AG04449 (cell line): ENCODE measurements at regions of chr7 and their contacts with region 1.

Region 1: GRCh38 chr7:1193593-1194424 is 33.8 kb upstream of the ZFAND2A start:
- DNase-seq: no peak
- H3K4me3 ChIP-seq: no peak overlapping the region
- CTCF ChIP-seq: peak; percentile 73

Region 2: GRCh38 chr7:1175967-1176851 is 17.6 kb before region 1 on chr7:
- CTCF ChIA-PET with region 1: interaction called, 72 read pairs
- POLR2A ChIA-PET with region 1: no interaction called
- DNase-seq: no peak
- H3K4me3 ChIP-seq: peak overlapping the region; percentile 25; the same call in 1 of the 2 replicates
- CTCF ChIP-seq: peak; percentile 96

Region 3: DNA sequence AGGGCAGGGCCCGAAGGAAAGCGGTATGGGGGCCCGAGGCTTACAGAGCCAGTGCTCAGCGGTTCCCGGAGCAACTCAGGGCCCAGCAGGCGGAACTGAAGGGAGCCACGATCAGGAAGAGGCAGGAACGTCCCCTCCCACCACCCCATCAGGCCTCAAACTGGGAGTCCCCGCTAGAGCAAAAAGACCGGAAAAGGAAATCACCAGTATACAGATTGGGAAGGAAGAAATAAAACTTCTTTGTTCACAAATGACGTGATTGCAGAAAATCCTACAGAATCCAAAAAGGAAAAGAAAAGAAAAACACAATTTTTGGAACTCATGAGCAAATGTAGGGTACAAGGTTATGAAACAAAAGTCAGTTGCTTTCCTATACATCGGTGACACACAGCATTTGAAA is 12.2 kb before region 1 on chr7:
- CTCF ChIA-PET with region 1: interaction called, 72 read pairs
- POLR2A ChIA-PET with region 1: no interaction called
- DNase-seq: no peak
- H3K4me3 ChIP-seq: no peak overlapping the region
- CTCF ChIP-seq: no peak

Region 4: GRCh38 chr7:1403638-1404459 is 210.0 kb after region 1 on chr7:
- CTCF ChIA-PET with region 1: interaction called, 11 read pairs
- POLR2A ChIA-PET with region 1: no interaction called
- DNase-seq: no peak
- H3K4me3 ChIP-seq: no peak overlapping the region; the same call in 1 of the 2 replicates
- CTCF ChIP-seq: peak; percentile 6

Region 5: GRCh38 chr7:1412322-1413261 is 218.8 kb after region 1 on chr7:
- CTCF ChIA-PET with region 1: interaction called, 31 read pairs
- POLR2A ChIA-PET with region 1: no interaction called
- DNase-seq: no peak
- H3K4me3 ChIP-seq: no peak overlapping the region; the same call in 1 of the 2 replicates
- CTCF ChIP-seq: peak; percentile 78